B cell (primary cell): ENCODE measurements at regions of chr7 and their contacts with region 1.

Region 1: GRCh38 chr7:149742075-149742701 is 31.2 kb downstream of the ZNF467 start:
- DNase-seq: peak; percentile 77
- ATAC-seq: peak; percentile 80
- H3K4me3 ChIP-seq: peak overlapping the region; percentile 21 to 57 (median 44)
- H3K4me3 Mint-ChIP-seq: peak overlapping the region; percentile 89
- H3K27ac ChIP-seq: no peak overlapping the region
- H3K27ac Mint-ChIP-seq: no peak overlapping the region
- H3K4me1 ChIP-seq: peaks cover 9 to 11% of the 10 kb centered on the region in 2 donors
- H3K4me1 Mint-ChIP-seq: peaks cover 10% of the 10 kb centered on the region
- H3K27me3 ChIP-seq: peaks cover 0 to 24% (median 0%) of the 10 kb centered on the region in 4 experiments
- H3K27me3 Mint-ChIP-seq: peaks cover 37% of the 10 kb centered on the region
- CTCF ChIP-seq: peak; percentile 89

Region 2: DNA sequence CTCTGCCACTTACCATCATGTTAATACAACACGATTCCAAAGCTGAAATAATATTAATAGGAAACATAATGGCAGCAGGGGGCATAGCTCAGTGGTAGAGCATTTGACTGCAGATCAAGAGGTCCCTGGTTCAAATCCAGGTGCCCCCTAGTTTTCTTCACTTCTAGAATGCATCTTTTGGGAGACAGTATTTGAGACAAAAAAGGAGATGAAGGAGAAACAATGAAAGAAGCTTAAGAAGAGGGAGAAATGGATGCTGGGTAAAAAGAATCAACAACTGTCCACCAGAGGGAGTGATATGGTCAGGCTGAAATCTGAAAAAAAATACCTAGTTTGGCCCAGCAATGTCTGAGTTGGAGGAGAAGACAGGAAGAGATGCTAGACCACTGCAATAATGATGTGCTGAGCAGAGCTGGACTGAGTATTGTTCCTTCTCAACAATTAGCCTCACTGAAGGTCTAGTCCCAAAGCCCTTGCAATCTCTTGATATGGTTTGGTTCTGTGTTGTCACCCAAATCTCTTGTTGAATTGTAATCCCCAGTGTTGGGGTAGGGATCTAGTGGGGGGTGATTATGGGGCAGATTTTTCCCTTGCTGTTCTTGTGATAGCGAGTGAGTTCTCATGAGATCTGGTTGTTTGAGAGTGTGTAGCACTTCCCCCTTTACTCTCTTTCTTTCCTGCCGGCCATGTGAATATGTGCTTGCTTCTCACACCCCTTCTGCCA is 431.9 kb before region 1 on chr7:
- CTCF ChIA-PET with region 1: interaction called, 23 read pairs
- POLR2A ChIA-PET with region 1: no interaction called
- intact Hi-C with region 1: no loop called
- DNase-seq: peak; percentile 50
- ATAC-seq: peak; percentile 63
- H3K4me3 ChIP-seq: no peak overlapping the region
- H3K4me3 Mint-ChIP-seq: no peak overlapping the region
- H3K27ac ChIP-seq: no peak overlapping the region
- H3K27ac Mint-ChIP-seq: no peak overlapping the region
- H3K4me1 ChIP-seq: no peaks in the 10 kb centered on the region
- H3K4me1 Mint-ChIP-seq: no peaks in the 10 kb centered on the region
- H3K27me3 ChIP-seq: no peaks in the 10 kb centered on the region
- H3K27me3 Mint-ChIP-seq: peaks cover 3% of the 10 kb centered on the region
- CTCF ChIP-seq: peak; percentile 56

Region 3: DNA sequence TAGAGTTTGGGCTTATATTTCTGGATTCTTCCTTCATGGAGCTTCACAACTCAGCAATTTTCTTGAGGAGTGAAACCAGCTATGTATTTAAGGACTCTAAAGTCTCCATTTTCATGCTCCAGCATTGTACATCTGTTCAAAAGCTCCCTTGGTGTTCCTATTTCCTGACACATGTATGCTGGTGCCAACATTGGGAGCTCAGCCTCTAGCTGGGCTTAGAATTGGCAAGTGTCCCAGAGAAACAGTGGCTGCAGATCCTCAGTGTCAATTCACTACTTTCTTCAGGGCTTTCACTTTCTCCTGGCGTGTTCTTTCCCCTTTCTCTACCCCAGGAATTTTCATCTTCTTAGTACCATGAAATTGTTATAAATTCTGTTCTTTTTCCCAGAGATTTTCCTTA is 71.9 kb before region 1 on chr7:
- CTCF ChIA-PET with region 1: interaction called, 15 read pairs
- POLR2A ChIA-PET with region 1: no interaction called
- intact Hi-C with region 1: no loop called
- DNase-seq: no peak
- ATAC-seq: no peak
- H3K4me3 ChIP-seq: no peak overlapping the region
- H3K4me3 Mint-ChIP-seq: no peak overlapping the region
- H3K27ac ChIP-seq: no peak overlapping the region
- H3K27ac Mint-ChIP-seq: no peak overlapping the region
- H3K4me1 ChIP-seq: no peaks in the 10 kb centered on the region
- H3K4me1 Mint-ChIP-seq: no peaks in the 10 kb centered on the region
- H3K27me3 ChIP-seq: peaks cover 0 to 12% (median 0%) of the 10 kb centered on the region in 4 experiments
- H3K27me3 Mint-ChIP-seq: peaks cover 63% of the 10 kb centered on the region
- CTCF ChIP-seq: no peak

Region 4: GRCh38 chr7:149722356-149722957 is 19.7 kb before region 1 on chr7:
- CTCF ChIA-PET with region 1: interaction called, 10 read pairs
- POLR2A ChIA-PET with region 1: no interaction called
- intact Hi-C with region 1: no loop called
- DNase-seq: no peak
- ATAC-seq: no peak
- H3K4me3 ChIP-seq: no peak overlapping the region
- H3K4me3 Mint-ChIP-seq: no peak overlapping the region
- H3K27ac ChIP-seq: no peak overlapping the region
- H3K27ac Mint-ChIP-seq: no peak overlapping the region
- H3K4me1 ChIP-seq: no peaks in the 10 kb centered on the region
- H3K4me1 Mint-ChIP-seq: no peaks in the 10 kb centered on the region
- H3K27me3 ChIP-seq: no peaks in the 10 kb centered on the region
- H3K27me3 Mint-ChIP-seq: no peaks in the 10 kb centered on the region
- CTCF ChIP-seq: no peak

Region 5: GRCh38 chr7:149771721-149772240 is 29.6 kb after region 1 on chr7:
- CTCF ChIA-PET with region 1: interaction called, 6 read pairs
- POLR2A ChIA-PET with region 1: no interaction called
- intact Hi-C with region 1: loop called (anchors 1 kb)
- DNase-seq: peak; percentile 89
- ATAC-seq: peak; percentile 97
- H3K4me3 ChIP-seq: peak overlapping the region in 4 of 5 experiments; percentile 53 to 74 (median 64)
- H3K4me3 Mint-ChIP-seq: peak overlapping the region; percentile 78
- H3K27ac ChIP-seq: no peak overlapping the region
- H3K27ac Mint-ChIP-seq: no peak overlapping the region
- H3K4me1 ChIP-seq: peaks cover 7 to 19% of the 10 kb centered on the region in 2 donors
- H3K4me1 Mint-ChIP-seq: peaks cover 9% of the 10 kb centered on the region
- H3K27me3 ChIP-seq: peaks cover 0 to 19% (median 1%) of the 10 kb centered on the region in 4 experiments
- H3K27me3 Mint-ChIP-seq: peaks cover 10% of the 10 kb centered on the region
- CTCF ChIP-seq: no peak

Region 6: GRCh38 chr7:149809215-149809614 is 67.0 kb after region 1 on chr7:
- CTCF ChIA-PET with region 1: no interaction called
- POLR2A ChIA-PET with region 1: no interaction called
- intact Hi-C with region 1: no loop called
- DNase-seq: no peak
- ATAC-seq: no peak
- H3K4me3 ChIP-seq: no peak overlapping the region
- H3K4me3 Mint-ChIP-seq: no peak overlapping the region
- H3K27ac ChIP-seq: no peak overlapping the region
- H3K27ac Mint-ChIP-seq: no peak overlapping the region
- H3K4me1 ChIP-seq: no peaks in the 10 kb centered on the region
- H3K4me1 Mint-ChIP-seq: no peaks in the 10 kb centered on the region
- H3K27me3 ChIP-seq: no peaks in the 10 kb centered on the region
- H3K27me3 Mint-ChIP-seq: peaks cover 9% of the 10 kb centered on the region
- CTCF ChIP-seq: no peak